PC-3 (cell line): ENCODE measurements at regions of chr19 and their contacts with region 1.

Region 1: DNA sequence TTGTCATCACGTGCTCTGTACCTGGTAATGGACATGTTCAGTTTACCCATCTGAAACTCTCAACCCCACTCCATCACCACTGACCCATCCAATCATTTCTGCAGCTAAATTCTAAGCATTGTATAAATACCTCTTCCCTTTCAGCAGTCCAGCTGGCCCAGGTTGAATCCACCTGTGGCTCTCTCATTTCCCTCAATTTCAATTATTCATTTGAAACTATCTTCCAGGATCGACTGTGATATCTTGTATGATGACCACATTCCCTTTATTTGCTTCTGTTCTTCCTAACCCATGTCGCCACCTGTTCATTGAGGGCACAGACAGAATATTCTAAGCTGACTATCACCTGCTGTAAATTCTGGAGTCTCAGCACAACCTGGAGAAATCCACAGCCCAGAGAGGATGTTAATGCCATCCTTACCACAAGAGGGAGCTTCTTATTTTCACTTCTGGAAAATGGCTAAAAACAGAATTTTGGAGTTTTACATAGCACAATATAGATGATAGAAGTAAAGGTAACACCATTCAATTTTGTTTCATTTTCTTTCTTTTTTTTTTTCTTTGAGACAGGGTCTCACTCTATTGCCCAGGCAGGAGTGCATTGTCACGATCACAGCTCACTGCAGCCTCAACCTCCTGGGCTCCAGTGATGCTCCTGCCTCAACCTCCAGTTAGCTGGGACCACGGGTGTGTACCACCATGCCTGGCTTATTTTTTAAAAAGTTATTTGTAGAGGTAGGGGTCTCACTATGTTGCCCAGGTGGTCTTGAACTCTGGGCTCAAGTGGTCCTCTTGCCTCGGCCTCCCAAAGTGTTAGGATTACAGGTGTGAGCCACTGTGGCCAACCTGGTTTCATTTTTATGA is 38.6 kb downstream of the ZNF823 start:
- DNase-seq: peak; percentile 77
- ATAC-seq: peak; percentile 74
- H3K4me3 ChIP-seq: no peak overlapping the region
- H3K27ac ChIP-seq: no peak overlapping the region
- H3K4me1 ChIP-seq: peaks cover 1% of the 10 kb centered on the region; the same call in 1 of the 2 replicates
- H3K27me3 ChIP-seq: no peaks in the 10 kb centered on the region
- CTCF ChIP-seq: peak; percentile 93

Region 2: GRCh38 chr19:11578258-11579142 is 121.7 kb before region 1 on chr19:
- CTCF ChIA-PET with region 1: no interaction called
- POLR2A ChIA-PET with region 1: no interaction called
- intact Hi-C with region 1: no loop called
- DNase-seq: no peak
- ATAC-seq: no peak
- H3K4me3 ChIP-seq: no peak overlapping the region
- H3K27ac ChIP-seq: no peak overlapping the region
- H3K4me1 ChIP-seq: no peaks in the 10 kb centered on the region
- H3K27me3 ChIP-seq: no peaks in the 10 kb centered on the region
- CTCF ChIP-seq: no peak

Region 3: DNA sequence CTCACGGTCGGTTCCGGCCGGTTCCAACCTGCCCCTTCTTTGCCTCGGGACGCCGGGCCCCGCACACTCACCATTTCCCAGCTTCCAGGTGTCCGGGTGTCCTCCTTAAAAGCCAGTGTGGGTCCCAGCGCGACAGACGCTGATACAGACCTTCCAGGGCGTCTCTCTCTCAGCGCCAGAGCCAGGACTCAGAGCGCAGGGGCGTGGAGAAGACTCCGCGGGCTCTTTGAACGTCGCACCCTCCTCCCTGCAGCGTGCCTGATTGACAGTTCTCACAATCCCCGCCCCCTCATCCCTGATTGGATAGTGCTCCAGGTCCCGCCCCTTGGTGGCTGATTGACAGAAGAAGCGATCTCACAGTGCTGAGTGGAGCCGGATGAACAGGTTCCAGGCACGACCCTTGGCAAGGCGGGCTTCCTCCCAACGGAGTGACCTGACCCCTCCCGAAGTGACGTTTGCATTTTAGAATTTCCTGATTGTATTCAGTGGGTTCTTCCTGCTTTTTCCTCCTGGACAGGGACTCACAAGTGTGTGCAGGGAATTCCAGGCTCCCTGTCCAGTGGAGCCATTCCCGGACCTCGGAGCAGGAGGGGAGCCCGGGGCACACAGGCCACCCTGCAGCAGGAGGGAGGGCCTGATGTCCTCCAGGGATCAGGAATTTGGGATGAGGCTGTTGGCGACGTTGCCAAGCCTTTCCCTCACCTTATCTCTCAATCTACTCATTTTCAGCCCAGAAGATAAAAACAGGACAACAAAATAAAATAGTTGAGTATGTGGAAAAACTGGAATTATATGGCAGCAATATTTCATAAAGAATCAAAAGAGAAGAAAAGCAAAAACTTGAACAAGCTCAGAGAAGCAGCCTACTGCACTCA is 38.8 kb after region 1 on chr19 and contains the start of gene ZNF823:
- CTCF ChIA-PET with region 1: interaction called, 4 read pairs
- POLR2A ChIA-PET with region 1: no interaction called
- intact Hi-C with region 1: loop called (anchors 2 kb)
- DNase-seq: peak; percentile 100
- ATAC-seq: peak; percentile 93
- H3K4me3 ChIP-seq: peak within 1 kb of the TSS; percentile 85
- H3K27ac ChIP-seq: peak within 1 kb of the TSS; percentile 75
- H3K4me1 ChIP-seq: peaks cover 20% of the 10 kb centered on the region
- H3K27me3 ChIP-seq: no peaks in the 10 kb centered on the region
- CTCF ChIP-seq: no peak
- total RNA-seq, gene ZNF823: 5.1 and 5.6 TPM in 2 replicates

Region 4: GRCh38 chr19:11766597-11767591 is 66.7 kb after region 1 on chr19 and contains the start of gene ZNF441:
- CTCF ChIA-PET with region 1: interaction called, 5 read pairs
- POLR2A ChIA-PET with region 1: no interaction called
- intact Hi-C with region 1: loop called (anchors 1 kb)
- DNase-seq: peak; percentile 98
- ATAC-seq: peak; percentile 97
- H3K4me3 ChIP-seq: peak within 1 kb of the TSS; percentile 77
- H3K27ac ChIP-seq: peak within 1 kb of the TSS; percentile 49
- H3K4me1 ChIP-seq: peaks cover 8% of the 10 kb centered on the region; the same call in 1 of the 2 replicates
- H3K27me3 ChIP-seq: no peaks in the 10 kb centered on the region
- CTCF ChIP-seq: no peak
- total RNA-seq, gene ZNF441: 6.9 and 8.0 TPM in 2 replicates